Right cardiac atrium (tissue), 5 donors: ENCODE measurements at regions of chr22 and their contacts with region 1.

Region 1: DNA sequence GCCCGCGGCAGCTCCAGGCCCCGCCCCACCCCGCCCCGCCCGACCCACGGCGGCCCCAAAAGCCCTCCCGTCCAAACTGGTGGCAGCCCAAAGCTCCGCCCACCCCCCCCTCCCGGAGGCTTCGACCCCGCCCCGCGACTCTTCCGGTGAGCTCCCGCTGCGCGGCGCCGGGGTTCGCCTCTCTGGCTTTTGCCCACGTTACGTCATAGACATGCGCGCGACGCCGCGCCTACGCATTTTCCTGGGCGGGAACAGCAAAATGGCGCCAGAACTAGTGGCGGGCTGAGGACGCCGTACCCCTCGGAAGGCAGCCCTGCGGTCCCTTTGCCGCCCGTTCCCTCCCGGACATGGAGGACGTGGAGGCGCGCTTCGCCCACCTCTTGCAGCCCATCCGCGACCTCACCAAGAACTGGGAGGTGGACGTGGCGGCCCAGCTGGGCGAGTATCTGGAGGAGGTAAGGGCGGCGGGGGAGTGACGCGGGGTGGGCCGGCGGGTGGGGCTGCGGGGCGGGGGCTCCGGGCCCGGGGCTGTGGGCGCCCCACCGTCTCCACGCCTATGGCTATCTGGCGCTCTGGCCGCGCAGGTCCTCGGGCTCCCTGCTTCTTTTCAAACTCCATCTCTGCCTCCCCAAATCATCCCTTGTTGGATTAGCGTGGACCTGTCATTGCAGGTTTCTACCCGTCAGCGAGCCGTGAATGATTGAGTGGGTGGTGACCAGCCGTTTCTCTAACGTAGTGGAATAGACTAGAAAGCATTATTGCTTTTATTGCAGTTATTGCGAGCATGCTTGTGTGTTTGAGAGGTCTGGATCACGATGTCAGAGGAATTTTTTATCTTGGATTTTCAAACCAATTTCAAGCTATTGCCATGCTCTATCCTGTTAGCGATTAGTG is at the start of gene NCAPH2:
- DNase-seq: peak; percentile 97 to 98 (median 98)
- ATAC-seq: peak; percentile 77 to 80
- H3K4me3 ChIP-seq: peak within 1 kb of the TSS; percentile 77
- H3K27ac ChIP-seq: peak within 1 kb of the TSS; percentile 81
- H3K4me1 ChIP-seq: no peaks in the 10 kb centered on the region
- H3K27me3 ChIP-seq: no peaks in the 10 kb centered on the region
- total RNA-seq, gene NCAPH2: 23.3 to 35.0 (median 28.6) TPM

Region 2: GRCh38 chr22:50236731-50237409 is 271.4 kb before region 1 on chr22:
- intact Hi-C with region 1: loop called in 2 of 4 experiments (anchors 10 kb)
- DNase-seq: peak in 1 of 3 donors; percentile 18
- ATAC-seq: no peak
- H3K4me3 ChIP-seq: no peak overlapping the region
- H3K27ac ChIP-seq: no peak overlapping the region
- H3K4me1 ChIP-seq: no peaks in the 10 kb centered on the region
- H3K27me3 ChIP-seq: no peaks in the 10 kb centered on the region

Region 3: DNA sequence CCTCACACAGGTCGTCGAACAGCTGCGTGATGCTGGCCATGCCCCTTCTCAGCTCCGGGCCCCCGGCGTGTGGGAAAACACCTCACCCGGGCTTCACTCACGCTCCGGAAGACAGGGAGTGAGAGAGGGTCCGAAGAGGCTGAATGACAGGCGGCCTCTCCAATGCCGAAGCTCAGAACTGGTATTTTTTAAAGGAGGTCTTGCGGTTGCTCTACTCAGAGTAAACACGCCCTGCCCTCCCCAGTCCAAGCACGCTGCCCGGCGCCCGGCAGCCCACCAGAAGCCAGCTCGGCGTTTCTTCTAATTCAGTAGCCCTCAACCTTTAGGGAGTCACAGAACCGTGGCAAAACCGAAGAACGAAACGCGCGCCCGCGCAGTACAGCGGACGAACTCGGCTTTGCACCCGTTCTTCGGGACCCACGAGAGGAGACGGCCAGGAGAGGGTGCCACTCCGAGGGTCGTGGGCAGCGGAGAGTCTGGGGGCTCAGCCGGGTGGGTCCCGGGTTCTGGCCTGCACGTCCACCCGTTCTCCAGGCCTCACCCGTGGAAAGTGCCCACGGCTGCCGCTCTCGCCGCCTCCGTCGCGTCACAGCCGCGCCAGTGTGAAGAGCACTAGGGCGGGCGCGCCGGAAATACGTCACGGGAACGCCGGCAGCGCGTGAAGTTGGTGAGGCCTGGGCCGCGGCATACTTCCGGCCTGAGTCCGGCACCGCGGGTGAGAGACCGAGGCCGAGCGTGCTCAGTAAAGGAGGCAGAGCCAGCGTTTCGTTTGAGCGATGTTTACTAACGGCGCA is 263.6 kb before region 1 on chr22 and contains the start of gene TUBGCP6:
- intact Hi-C with region 1: loop called in 2 of 4 experiments (anchors 10 kb)
- DNase-seq: peak; percentile 96 to 99 (median 98)
- ATAC-seq: peak; percentile 92 to 93
- H3K4me3 ChIP-seq: peak within 1 kb of the TSS; percentile 87
- H3K27ac ChIP-seq: peak within 1 kb of the TSS; percentile 86
- H3K4me1 ChIP-seq: no peaks in the 10 kb centered on the region
- H3K27me3 ChIP-seq: no peaks in the 10 kb centered on the region
- total RNA-seq, gene TUBGCP6: 20.6 to 22.8 (median 22.6) TPM